Activated CD8-positive, alpha-beta T cell treated with anti-CD3 and anti-CD28 coated beads for 36 hours (primary cell): ENCODE measurements at regions of chrX and their contacts with region 1.

Region 1: DNA sequence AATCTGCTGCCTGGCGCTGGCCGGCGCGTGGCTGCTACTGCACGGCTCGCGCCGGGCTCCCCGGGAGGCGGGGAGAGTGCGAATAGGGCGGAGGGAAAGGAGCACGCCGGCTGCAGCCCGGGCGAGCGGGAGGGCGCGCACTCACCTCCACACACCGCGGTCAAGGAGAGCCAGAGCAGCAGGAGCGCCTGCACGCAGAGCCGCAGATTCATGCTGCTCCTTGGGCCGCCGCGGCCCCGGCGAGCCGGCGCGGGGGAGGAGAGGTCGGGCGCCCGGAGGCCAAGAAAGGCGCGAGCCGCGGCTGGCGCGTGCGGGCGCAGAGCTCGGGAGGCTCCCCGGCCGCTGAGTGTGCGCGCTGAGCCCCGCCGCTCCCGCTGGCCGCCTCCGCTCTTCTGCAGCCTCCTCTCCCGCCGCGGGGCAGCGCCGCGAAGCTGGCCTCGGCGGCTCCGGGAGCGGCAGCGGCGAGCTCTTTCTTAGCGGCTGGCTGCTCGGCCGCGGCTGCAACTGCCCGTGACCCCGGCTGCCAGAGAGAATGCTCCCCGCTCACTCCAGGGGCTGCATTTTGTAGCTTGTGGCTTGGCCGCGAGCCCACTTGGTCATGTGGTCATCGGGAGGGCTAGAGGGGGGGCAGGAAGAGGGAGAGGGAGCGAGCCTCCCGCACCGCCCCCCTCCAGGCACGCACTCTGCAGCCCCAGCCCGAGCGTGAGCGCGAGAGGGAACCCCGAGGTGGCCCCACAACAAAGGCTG is at the start of gene APLN:
- DNase-seq: peak; percentile 19
- ATAC-seq: peak; percentile 73
- H3K4me3 Mint-ChIP-seq: peak within 1 kb of the TSS; percentile 66
- H3K27ac Mint-ChIP-seq: no peak within 1 kb of the TSS
- H3K4me1 Mint-ChIP-seq: peaks cover 3% of the 10 kb centered on the region
- H3K27me3 Mint-ChIP-seq: peaks cover 10% of the 10 kb centered on the region
- CTCF ChIP-seq: no peak
- total RNA-seq, gene APLN: 3.5 TPM

Region 2: GRCh38 chrX:129637217-129638109 is 17.1 kb before region 1 on chrX:
- CTCF ChIA-PET with region 1: interaction called, 12 read pairs
- POLR2A ChIA-PET with region 1: no interaction called
- intact Hi-C with region 1: no loop called
- DNase-seq: peak; percentile 78
- ATAC-seq: peak; percentile 87
- H3K4me3 Mint-ChIP-seq: no peak overlapping the region
- H3K27ac Mint-ChIP-seq: peak overlapping the region; percentile 42
- H3K4me1 Mint-ChIP-seq: peaks cover 2% of the 10 kb centered on the region
- H3K27me3 Mint-ChIP-seq: no peaks in the 10 kb centered on the region
- CTCF ChIP-seq: peak; percentile 76

Region 3: DNA sequence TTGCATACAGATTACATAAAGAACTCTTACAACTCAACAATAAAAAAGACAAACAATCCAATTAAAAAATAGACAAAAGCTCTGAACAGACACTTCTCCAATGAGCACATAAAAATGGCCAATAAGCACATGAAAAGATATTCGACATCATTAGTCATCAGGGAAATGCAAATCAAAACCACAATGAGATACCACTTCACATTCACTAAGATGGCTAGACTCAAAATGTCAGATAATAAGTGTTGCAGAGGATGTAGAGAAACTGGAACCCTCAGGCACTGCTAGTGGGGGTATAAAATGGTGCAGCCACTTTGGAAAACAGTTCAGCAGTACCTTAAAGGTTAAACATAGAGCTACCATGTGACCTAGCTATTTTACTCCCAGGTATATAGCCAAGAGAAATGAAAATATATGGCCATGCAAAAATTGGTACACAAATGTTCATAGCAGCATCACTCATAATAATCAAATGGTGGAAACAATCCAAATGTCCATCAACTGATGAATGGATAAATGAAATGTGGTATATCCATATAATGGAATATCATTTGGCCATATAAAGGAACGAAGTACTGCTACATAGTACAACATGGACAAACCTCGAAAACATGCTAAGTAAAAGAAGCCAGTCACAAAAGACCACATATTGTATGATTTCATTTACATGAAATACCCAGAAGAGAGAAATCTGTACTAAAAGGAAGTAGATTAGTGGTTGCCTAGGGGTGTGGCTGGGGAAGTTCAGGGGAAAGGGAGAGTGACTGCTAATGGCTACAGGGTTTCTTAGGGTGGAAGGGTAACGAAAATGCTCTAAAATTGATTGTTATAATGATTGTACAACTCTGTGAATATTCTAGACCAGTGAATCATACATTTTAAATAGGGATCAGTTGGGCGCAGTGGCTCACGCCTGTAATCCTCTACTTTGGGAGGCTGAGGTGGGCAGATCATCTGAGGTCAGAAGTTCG is 154.5 kb after region 1 on chrX:
- CTCF ChIA-PET with region 1: no interaction called
- POLR2A ChIA-PET with region 1: no interaction called
- intact Hi-C with region 1: no loop called
- DNase-seq: no peak
- ATAC-seq: peak; percentile 89
- H3K4me3 Mint-ChIP-seq: no peak overlapping the region
- H3K27ac Mint-ChIP-seq: peak overlapping the region; percentile 73
- H3K4me1 Mint-ChIP-seq: peaks cover 22% of the 10 kb centered on the region
- H3K27me3 Mint-ChIP-seq: no peaks in the 10 kb centered on the region
- CTCF ChIP-seq: no peak